ENCODE measurements at regions of chr14 and their contacts with region 1.

Region 1: GRCh38 chr14:77457522-77458290 is at the starts of genes AHSA1 and VIPAS39:
- DNase-seq: peak; percentile 99
- ATAC-seq: peak; percentile 95
- H3K4me3 ChIP-seq: peak within 1 kb of the TSS; percentile 88
- H3K27ac ChIP-seq: peak within 1 kb of the TSS; percentile 97
- H3K4me1 ChIP-seq: peaks cover 13% of the 10 kb centered on the region
- H3K27me3 ChIP-seq: no peaks in the 10 kb centered on the region
- CTCF ChIP-seq: no peak
- EP300 ChIP-seq: no peak
- POLR2A ChIP-seq: peak; percentile 93
- RAD21 ChIP-seq: no peak
- polyA plus RNA-seq, gene AHSA1: 51.8 to 98.3 TPM
- polyA plus RNA-seq, gene VIPAS39: 6.7 to 10.5 TPM

Region 2: GRCh38 chr14:77133720-77134338 is 323.9 kb before region 1 on chr14:
- CTCF ChIA-PET with region 1: no interaction called
- POLR2A ChIA-PET with region 1: no interaction called
- RAD21 ChIA-PET with region 1: no interaction called
- SMC1A ChIA-PET with region 1: no interaction called
- in situ Hi-C with region 1: no loop called
- intact Hi-C with region 1: no loop called
- DNase-seq: no peak
- ATAC-seq: peak; percentile 92
- H3K4me3 ChIP-seq: no peak overlapping the region
- H3K27ac ChIP-seq: no peak overlapping the region
- H3K4me1 ChIP-seq: no peaks in the 10 kb centered on the region
- H3K27me3 ChIP-seq: peaks cover 11 to 13% of the 10 kb centered on the region in 2 experiments
- CTCF ChIP-seq: no peak
- EP300 ChIP-seq: no peak
- POLR2A ChIP-seq: no peak
- RAD21 ChIP-seq: no peak

Region 3: GRCh38 chr14:77301103-77301502 is 156.6 kb before region 1 on chr14:
- CTCF ChIA-PET with region 1: interaction called, 13 read pairs
- POLR2A ChIA-PET with region 1: no interaction called
- RAD21 ChIA-PET with region 1: no interaction called
- SMC1A ChIA-PET with region 1: interaction called, 5 read pairs
- in situ Hi-C with region 1: no loop called
- intact Hi-C with region 1: no loop called
- DNase-seq: no peak
- ATAC-seq: peak; percentile 92
- H3K4me3 ChIP-seq: no peak overlapping the region
- H3K27ac ChIP-seq: no peak overlapping the region
- H3K4me1 ChIP-seq: no peaks in the 10 kb centered on the region
- H3K27me3 ChIP-seq: no peaks in the 10 kb centered on the region
- CTCF ChIP-seq: peak; percentile 73 to 81 (median 74)
- EP300 ChIP-seq: no peak
- POLR2A ChIP-seq: no peak
- RAD21 ChIP-seq: peak; percentile 83

Region 4: DNA sequence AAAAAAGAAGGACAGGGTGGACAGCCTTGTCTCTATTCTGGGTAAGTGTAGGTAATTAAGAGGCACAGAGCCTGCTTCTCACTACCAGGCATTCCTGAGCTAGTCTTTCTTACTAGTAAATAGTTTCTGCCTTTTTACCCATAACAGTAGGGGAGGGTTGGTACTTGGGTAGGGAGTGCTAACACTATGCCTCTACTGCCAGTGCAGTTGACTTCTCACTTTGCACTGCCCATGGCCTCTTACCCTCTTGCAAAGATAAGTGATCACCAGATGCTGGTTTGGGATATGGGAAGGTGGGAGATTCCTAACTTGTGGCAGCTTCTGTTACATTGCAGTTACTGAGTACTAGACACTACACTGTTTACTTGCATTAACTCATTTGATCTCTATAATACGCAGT is 11.8 kb after region 1 on chr14:
- CTCF ChIA-PET with region 1: interaction called, 26 read pairs
- POLR2A ChIA-PET with region 1: interaction called, 3 read pairs
- RAD21 ChIA-PET with region 1: interaction called, 4 read pairs
- SMC1A ChIA-PET with region 1: interaction called, 12 read pairs
- in situ Hi-C with region 1: no loop called
- intact Hi-C with region 1: no loop called
- DNase-seq: no peak
- ATAC-seq: no peak
- H3K4me3 ChIP-seq: no peak overlapping the region
- H3K27ac ChIP-seq: no peak overlapping the region
- H3K4me1 ChIP-seq: no peaks in the 10 kb centered on the region
- H3K27me3 ChIP-seq: no peaks in the 10 kb centered on the region
- CTCF ChIP-seq: no peak
- EP300 ChIP-seq: no peak
- POLR2A ChIP-seq: no peak
- RAD21 ChIP-seq: no peak

Region 5: GRCh38 chr14:77516126-77516525 is 58.4 kb after region 1 on chr14:
- CTCF ChIA-PET with region 1: interaction called, 10 read pairs
- POLR2A ChIA-PET with region 1: no interaction called
- RAD21 ChIA-PET with region 1: no interaction called
- SMC1A ChIA-PET with region 1: interaction called, 5 read pairs
- in situ Hi-C with region 1: no loop called
- intact Hi-C with region 1: no loop called
- DNase-seq: no peak
- ATAC-seq: no peak
- H3K4me3 ChIP-seq: no peak overlapping the region
- H3K27ac ChIP-seq: no peak overlapping the region
- H3K4me1 ChIP-seq: no peaks in the 10 kb centered on the region
- H3K27me3 ChIP-seq: no peaks in the 10 kb centered on the region
- CTCF ChIP-seq: no peak
- EP300 ChIP-seq: no peak
- POLR2A ChIP-seq: no peak
- RAD21 ChIP-seq: no peak

Region 6: GRCh38 chr14:77554207-77554606 is 96.5 kb after region 1 on chr14:
- CTCF ChIA-PET with region 1: interaction called, 140 read pairs
- POLR2A ChIA-PET with region 1: interaction called, 6 read pairs
- RAD21 ChIA-PET with region 1: interaction called, 44 read pairs
- SMC1A ChIA-PET with region 1: interaction called, 91 read pairs
- in situ Hi-C with region 1: loop called (anchors 5 kb)
- intact Hi-C with region 1: loop called (anchors 1 kb)
- DNase-seq: peak; percentile 37
- ATAC-seq: peak; percentile 83
- H3K4me3 ChIP-seq: no peak overlapping the region
- H3K27ac ChIP-seq: peak overlapping the region; percentile 87
- H3K4me1 ChIP-seq: peaks cover 16% of the 10 kb centered on the region
- H3K27me3 ChIP-seq: no peaks in the 10 kb centered on the region
- CTCF ChIP-seq: no peak
- EP300 ChIP-seq: no peak
- POLR2A ChIP-seq: no peak
- RAD21 ChIP-seq: no peak

Region 7: DNA sequence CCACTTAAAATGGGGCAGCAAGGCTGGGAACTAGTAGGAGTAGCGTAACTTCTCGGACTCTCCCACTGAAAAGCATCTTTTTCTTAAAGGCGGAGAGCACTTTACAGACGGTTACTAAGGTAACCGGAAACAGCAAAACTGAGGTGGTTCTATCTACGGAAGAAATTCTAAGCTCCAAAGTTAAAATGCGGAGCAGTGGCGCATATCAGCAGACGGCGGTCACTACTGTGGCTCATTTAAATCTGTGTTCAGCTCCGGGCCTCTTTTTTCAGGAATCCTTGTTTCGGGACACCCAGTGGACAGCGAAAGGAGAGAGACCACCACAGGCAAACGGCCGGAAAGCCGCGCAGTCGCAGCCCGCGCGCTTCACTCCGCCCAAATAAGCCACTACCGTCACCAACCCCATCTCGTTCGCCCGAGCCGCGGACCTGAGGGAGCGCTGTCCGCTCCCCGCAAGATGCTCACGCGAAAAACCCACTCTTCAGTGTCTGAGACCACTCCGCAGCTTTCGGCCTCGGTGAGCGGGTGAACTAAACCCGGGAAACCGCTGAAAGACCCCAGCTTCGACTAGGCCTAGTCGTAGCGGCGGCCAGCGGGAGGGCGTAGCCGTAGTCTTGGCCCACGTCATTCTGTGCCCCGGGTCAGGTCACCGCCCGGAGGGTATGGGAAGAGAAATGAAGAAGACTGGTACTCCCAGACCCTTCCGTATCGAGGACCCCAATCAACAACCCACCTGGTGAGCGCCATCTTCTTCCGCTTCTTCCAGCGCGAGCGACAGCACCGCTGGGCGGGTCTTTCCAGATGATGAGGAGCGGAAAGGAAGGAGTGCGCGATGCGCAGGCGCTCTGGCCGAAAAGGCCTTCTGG is 302.9 kb after region 1 on chr14 and contains the start of gene SNW1:
- CTCF ChIA-PET with region 1: interaction called, 4 read pairs
- POLR2A ChIA-PET with region 1: no interaction called
- RAD21 ChIA-PET with region 1: interaction called, 3 read pairs
- SMC1A ChIA-PET with region 1: no interaction called
- in situ Hi-C with region 1: no loop called
- intact Hi-C with region 1: loop called (anchors 2 kb)
- DNase-seq: peak; percentile 84
- ATAC-seq: peak; percentile 95
- H3K4me3 ChIP-seq: peak within 1 kb of the TSS; percentile 88
- H3K27ac ChIP-seq: peak within 1 kb of the TSS; percentile 82
- H3K4me1 ChIP-seq: peaks cover 2% of the 10 kb centered on the region
- H3K27me3 ChIP-seq: no peaks in the 10 kb centered on the region
- CTCF ChIP-seq: no peak
- EP300 ChIP-seq: no peak
- POLR2A ChIP-seq: peak; percentile 88
- RAD21 ChIP-seq: no peak
- polyA plus RNA-seq, gene SNW1: 73.7 to 86.8 TPM